Common myeloid progenitor, CD34-positive (primary cell): ENCODE measurements at regions of chr11 and their contacts with region 1.

Region 1: GRCh38 chr11:8018484-8019313 is 31.6 kb downstream of the EIF3F start:
- DNase-seq: peak; percentile 46 to 80 (median 70)
- H3K4me3 ChIP-seq: peak overlapping the region in 6 of 7 experiments; percentile 45 to 77 (median 62)
- H3K27ac ChIP-seq: no peak overlapping the region
- H3K4me1 ChIP-seq: peaks cover 2 to 19% (median 11%) of the 10 kb centered on the region in 4 experiments
- H3K27me3 ChIP-seq: peaks cover 13 to 58% (median 42%) of the 10 kb centered on the region in 5 experiments

Region 2: GRCh38 chr11:8033305-8034105 is 14.8 kb after region 1 on chr11:
- CTCF ChIA-PET with region 1: interaction called, 21 read pairs
- POLR2A ChIA-PET with region 1: no interaction called
- DNase-seq: peak; percentile 81 to 88 (median 88)
- H3K4me3 ChIP-seq: peak overlapping the region in 2 of 7 experiments; percentile 2 to 39
- H3K27ac ChIP-seq: no peak overlapping the region
- H3K4me1 ChIP-seq: peaks cover 0 to 10% (median 4%) of the 10 kb centered on the region in 4 experiments
- H3K27me3 ChIP-seq: peaks cover 0 to 15% (median 9%) of the 10 kb centered on the region in 5 experiments

Region 3: DNA sequence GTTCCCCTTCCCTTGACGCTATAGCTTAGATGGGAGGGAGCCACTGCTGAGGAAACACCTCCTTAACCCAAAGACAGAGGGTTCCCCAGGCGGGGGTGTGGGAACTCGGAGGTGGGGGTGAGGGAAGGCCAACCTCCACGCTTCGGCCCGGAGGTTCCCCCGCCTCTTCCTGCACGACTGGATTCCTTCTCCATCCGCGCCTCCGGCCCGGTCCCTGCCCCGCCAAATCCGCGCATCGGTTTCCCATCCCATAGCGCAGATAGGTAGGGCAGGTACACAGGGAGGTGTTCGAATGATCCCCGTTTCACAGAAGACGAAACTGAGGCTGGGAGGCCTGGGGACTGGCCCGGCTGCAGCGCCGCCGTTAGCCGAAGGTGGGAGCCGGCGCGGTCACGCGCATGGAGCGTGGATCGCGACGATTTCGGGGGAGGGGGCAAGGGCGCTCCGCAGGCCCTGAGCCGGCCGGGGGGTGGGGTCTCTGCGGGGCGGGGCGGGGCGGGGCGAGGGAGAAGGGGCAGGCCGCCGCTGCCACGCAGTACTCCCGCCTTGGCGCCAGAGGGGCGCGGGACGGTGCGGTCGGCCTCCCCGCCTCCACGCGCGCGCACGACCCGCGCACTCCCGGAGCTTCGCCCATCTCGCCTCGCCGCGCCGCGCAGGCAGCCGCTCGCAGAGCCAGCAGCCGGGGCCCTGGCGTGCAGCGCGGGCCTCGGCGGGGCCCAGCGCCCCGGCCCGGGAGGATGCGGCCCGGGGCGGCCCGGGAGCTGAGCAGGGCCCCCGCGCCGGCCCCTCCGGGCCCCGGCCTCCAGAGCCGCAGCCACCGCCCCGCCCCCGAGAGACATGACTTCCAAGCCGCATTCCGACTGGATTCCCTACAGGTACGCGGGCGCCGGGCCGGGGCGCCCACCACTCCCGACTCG is 62.2 kb after region 1 on chr11 and contains the start of gene TUB:
- CTCF ChIA-PET with region 1: no interaction called
- POLR2A ChIA-PET with region 1: no interaction called
- DNase-seq: peak; percentile 22 to 67 (median 56)
- H3K4me3 ChIP-seq: peak within 1 kb of the TSS in 6 of 7 experiments; percentile 13 to 79 (median 54)
- H3K27ac ChIP-seq: no peak within 1 kb of the TSS
- H3K4me1 ChIP-seq: peaks cover 0 to 14% (median 7%) of the 10 kb centered on the region in 4 experiments
- H3K27me3 ChIP-seq: peaks cover 2 to 42% (median 36%) of the 10 kb centered on the region in 5 experiments